HCT116 (cell line): ENCODE measurements at regions of chr12 and their contacts with region 1.

Region 1: DNA sequence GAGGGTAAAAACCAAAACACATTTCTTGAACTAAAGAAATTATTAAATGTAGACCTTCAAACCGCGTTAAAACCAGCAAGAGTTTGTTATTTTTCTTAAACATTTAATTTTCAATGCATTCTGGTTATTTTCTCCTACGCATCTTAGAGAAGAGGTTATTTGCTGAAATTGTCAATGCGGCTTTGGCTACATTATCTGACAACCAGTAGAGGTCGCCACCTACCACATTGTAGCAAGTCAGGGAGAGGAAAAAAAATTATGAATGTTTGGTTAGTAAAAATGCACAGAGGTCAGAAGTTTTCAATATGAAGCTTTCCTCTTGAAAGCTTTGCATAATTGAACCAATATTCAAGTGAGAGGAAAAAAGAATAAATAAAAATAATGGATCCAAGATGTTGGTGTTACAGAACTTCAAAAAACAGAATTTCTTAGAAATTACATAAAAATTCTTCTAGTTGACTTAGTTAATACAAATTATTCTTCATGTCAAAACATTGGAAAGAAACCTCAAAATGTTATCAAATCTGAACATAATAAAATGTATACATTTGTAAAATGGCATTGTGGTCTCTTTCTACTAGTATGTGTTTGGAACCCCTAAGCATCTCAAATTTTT is 159.4 kb upstream of the TMTC2 start:
- DNase-seq: peak; percentile 47
- ATAC-seq: peak; percentile 77
- H3K4me3 ChIP-seq: no peak overlapping the region
- H3K27ac ChIP-seq: no peak overlapping the region
- H3K4me1 ChIP-seq: no peaks in the 10 kb centered on the region
- H3K27me3 ChIP-seq: no peaks in the 10 kb centered on the region
- CTCF ChIP-seq: peak; percentile 68 to 96 (median 81)
- POLR2A ChIP-seq: no peak
- RAD21 ChIP-seq: peak; percentile 85

Region 2: GRCh38 chr12:82383930-82384552 is 143.2 kb before region 1 on chr12:
- CTCF ChIA-PET with region 1: no interaction called
- POLR2A ChIA-PET with region 1: no interaction called
- RAD21 ChIA-PET with region 1: no interaction called
- intact Hi-C with region 1: loop called (anchors 5 kb)
- DNase-seq: no peak
- ATAC-seq: peak; percentile 75
- H3K4me3 ChIP-seq: no peak overlapping the region
- H3K27ac ChIP-seq: no peak overlapping the region
- H3K4me1 ChIP-seq: no peaks in the 10 kb centered on the region
- H3K27me3 ChIP-seq: no peaks in the 10 kb centered on the region
- CTCF ChIP-seq: peak; percentile 32 to 60 (median 53); a peak in 5 of 6 replicates
- POLR2A ChIP-seq: no peak
- RAD21 ChIP-seq: peak; percentile 70

Region 3: DNA sequence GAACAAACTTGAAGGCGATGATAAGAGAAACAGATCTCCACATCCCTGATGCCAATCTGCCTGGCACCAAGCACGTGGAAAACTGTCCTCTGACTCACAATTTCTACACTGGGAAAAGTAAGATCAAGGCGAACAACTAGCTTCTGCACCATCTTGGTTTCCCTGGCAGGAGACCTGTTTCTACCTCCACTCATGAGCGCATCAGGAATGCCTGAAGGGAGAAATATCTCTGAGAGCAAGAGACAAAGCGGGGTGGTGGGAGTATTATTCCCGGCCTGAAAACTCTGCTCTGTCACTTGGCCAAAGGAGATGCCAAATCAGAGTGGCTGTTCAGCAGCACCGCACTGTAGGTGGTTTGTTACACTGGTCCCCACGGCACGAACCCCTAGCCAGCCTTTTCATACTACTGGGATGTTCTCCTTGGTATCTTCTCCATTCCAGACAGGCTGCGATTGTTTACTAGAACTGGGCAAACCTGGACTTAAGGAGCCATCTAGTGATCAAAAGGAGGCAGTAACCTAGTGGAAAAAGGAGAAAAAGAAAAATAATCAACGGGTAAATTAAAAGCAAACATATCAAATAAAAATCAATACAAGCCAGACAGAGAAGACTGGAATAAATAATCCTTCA is 100.4 kb after region 1 on chr12:
- CTCF ChIA-PET with region 1: no interaction called
- POLR2A ChIA-PET with region 1: no interaction called
- RAD21 ChIA-PET with region 1: no interaction called
- intact Hi-C with region 1: loop called (anchors 5 kb)
- DNase-seq: peak; percentile 26
- ATAC-seq: peak; percentile 82
- H3K4me3 ChIP-seq: no peak overlapping the region
- H3K27ac ChIP-seq: no peak overlapping the region
- H3K4me1 ChIP-seq: no peaks in the 10 kb centered on the region
- H3K27me3 ChIP-seq: no peaks in the 10 kb centered on the region
- CTCF ChIP-seq: peak; percentile 56 to 62 (median 62); a peak in 5 of 6 replicates
- POLR2A ChIP-seq: no peak
- RAD21 ChIP-seq: peak; percentile 87

Region 4: GRCh38 chr12:83005534-83006197 is 478.4 kb after region 1 on chr12:
- CTCF ChIA-PET with region 1: no interaction called
- POLR2A ChIA-PET with region 1: no interaction called
- RAD21 ChIA-PET with region 1: no interaction called
- intact Hi-C with region 1: loop called (anchors 10 kb)
- DNase-seq: no peak
- ATAC-seq: no peak
- H3K4me3 ChIP-seq: no peak overlapping the region
- H3K27ac ChIP-seq: no peak overlapping the region
- H3K4me1 ChIP-seq: no peaks in the 10 kb centered on the region
- H3K27me3 ChIP-seq: no peaks in the 10 kb centered on the region
- CTCF ChIP-seq: no peak
- POLR2A ChIP-seq: no peak
- RAD21 ChIP-seq: no peak

Region 5: DNA sequence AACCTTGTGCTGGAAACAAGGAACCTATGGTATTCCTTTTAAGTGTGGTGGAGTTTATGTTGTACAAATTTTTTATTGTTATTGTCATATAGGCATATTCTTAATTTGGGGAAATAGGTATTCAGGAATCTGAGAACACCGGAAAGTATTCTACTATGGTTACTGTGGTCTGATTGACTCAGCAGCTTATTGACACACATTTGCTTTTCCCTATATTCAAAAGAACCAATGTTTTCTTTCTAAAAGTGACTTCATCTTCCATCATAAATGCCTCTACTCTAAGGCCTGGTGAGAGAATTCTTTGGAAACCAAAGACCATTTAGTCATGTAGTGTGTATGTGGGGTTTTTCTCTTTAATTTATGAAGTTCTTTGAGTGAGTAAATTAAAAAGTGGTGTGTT is 634.2 kb after region 1 on chr12:
- CTCF ChIA-PET with region 1: no interaction called
- POLR2A ChIA-PET with region 1: no interaction called
- RAD21 ChIA-PET with region 1: no interaction called
- intact Hi-C with region 1: no loop called
- DNase-seq: no peak
- ATAC-seq: no peak
- H3K4me3 ChIP-seq: no peak overlapping the region
- H3K27ac ChIP-seq: no peak overlapping the region
- H3K4me1 ChIP-seq: no peaks in the 10 kb centered on the region
- H3K27me3 ChIP-seq: no peaks in the 10 kb centered on the region
- CTCF ChIP-seq: no peak
- POLR2A ChIP-seq: no peak
- RAD21 ChIP-seq: no peak

Region 6: DNA sequence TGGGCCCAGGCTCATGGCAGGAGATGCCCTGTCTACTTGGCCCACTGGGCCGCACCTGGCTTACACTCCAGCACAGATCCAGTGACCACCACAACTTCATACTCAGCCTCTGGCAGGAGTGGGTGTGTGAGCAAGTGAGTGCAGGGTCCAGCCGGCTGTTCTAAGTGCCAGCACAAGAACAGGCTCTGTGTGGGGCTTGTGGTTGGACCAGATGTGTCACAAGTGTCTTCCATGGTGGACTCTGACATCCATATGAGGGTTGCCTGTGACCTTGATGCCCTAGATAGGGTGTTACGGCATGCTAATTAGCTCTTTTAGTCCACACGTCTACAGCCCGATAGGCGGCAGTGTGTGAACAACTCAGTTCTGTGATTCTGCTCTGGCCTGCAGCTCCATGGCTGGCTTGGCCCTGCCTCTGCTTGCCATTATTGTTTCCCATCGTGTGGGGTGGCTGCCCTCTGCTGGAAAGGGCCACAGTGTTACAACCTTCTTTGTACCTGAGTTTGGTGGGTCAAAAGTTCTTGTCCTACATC is 1296.2 kb after region 1 on chr12:
- CTCF ChIA-PET with region 1: interaction called, 3 read pairs
- POLR2A ChIA-PET with region 1: no interaction called
- RAD21 ChIA-PET with region 1: no interaction called
- intact Hi-C with region 1: loop called (anchors 5 kb)
- DNase-seq: peak; percentile 44
- ATAC-seq: peak; percentile 75
- H3K4me3 ChIP-seq: no peak overlapping the region
- H3K27ac ChIP-seq: no peak overlapping the region
- H3K4me1 ChIP-seq: peaks cover 0 to 4% of the 10 kb centered on the region in 2 experiments; a peak in 1 of 4 replicates
- H3K27me3 ChIP-seq: no peaks in the 10 kb centered on the region
- CTCF ChIP-seq: peak; percentile 60 to 69 (median 62)
- POLR2A ChIP-seq: no peak
- RAD21 ChIP-seq: peak; percentile 83

Region 7: DNA sequence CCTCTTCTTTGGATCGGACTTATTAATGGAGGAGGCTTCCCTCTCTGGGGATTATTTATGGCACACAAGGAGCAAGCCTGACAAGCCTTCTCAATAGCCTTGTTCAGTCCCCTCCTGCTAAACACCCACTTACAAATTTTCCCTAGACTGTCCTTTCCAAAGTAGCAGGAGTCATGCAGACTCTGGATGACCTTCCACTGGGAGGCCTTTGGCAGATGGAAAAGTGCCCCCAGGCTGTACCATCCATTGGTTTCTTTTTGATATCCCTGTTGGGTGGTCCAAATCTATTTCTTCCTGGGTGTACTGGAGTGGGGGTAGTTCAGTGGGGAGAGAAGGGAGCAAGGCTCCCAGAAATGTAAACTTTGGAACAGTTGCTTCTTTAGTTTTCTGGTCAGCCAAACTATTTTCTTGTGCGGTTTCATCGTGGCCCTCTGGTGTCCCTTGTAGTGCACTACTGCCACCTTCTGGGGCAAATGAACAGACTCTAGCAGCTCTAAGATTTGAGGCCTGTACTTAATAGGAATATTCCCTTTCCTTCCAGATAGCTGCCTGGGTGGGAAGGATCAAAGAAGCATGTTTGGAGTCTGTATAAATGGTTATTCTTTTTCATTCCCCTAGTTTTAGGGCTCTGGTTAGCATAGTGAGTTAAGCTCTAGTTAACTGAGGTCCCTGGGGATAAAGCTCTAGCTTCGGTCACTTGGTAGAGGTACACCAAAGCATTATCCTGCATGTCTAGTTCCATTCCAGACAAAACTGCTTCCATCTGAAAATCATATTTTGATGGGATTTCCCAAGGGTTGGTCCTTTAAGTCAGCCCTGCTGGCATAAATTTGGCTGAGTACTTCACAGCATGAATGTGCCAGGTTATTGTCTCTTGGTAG is 1975.9 kb after region 1 on chr12:
- CTCF ChIA-PET with region 1: no interaction called
- POLR2A ChIA-PET with region 1: no interaction called
- RAD21 ChIA-PET with region 1: no interaction called
- intact Hi-C with region 1: loop called (anchors 5 kb)
- DNase-seq: peak; percentile 42
- ATAC-seq: peak; percentile 90
- H3K4me3 ChIP-seq: no peak overlapping the region
- H3K27ac ChIP-seq: no peak overlapping the region
- H3K4me1 ChIP-seq: peaks cover 0 to 16% of the 10 kb centered on the region in 2 experiments; a peak in 2 of 4 replicates
- H3K27me3 ChIP-seq: no peaks in the 10 kb centered on the region
- CTCF ChIP-seq: peak; percentile 41 to 77 (median 65); a peak in 5 of 6 replicates
- POLR2A ChIP-seq: no peak
- RAD21 ChIP-seq: peak; percentile 78